H1 (cell line): ENCODE measurements at regions of chr4 and their contacts with region 1.

Region 1: GRCh38 chr4:122827879-122828601 is 1.4 kb downstream of the FGF2 start:
- DNase-seq: peak; percentile 69 to 70
- H3K4me3 ChIP-seq: peak overlapping the region; percentile 79 to 98 (median 90)
- H3K27ac ChIP-seq: peak overlapping the region; percentile 94
- H3K4me1 ChIP-seq: peaks cover 5 to 27% (median 22%) of the 10 kb centered on the region in 4 experiments
- H3K27me3 ChIP-seq: no peaks in the 10 kb centered on the region
- CTCF ChIP-seq: peak in 2 of 3 experiments; percentile 9 to 14; a peak in 2 of 4 replicates
- EP300 ChIP-seq: peak in 1 of 2 experiments; percentile 58; a peak in 2 of 3 replicates
- POLR2A ChIP-seq: peak; percentile 62 to 72
- RAD21 ChIP-seq: no peak; a peak in 1 of 4 replicates

Region 2: DNA sequence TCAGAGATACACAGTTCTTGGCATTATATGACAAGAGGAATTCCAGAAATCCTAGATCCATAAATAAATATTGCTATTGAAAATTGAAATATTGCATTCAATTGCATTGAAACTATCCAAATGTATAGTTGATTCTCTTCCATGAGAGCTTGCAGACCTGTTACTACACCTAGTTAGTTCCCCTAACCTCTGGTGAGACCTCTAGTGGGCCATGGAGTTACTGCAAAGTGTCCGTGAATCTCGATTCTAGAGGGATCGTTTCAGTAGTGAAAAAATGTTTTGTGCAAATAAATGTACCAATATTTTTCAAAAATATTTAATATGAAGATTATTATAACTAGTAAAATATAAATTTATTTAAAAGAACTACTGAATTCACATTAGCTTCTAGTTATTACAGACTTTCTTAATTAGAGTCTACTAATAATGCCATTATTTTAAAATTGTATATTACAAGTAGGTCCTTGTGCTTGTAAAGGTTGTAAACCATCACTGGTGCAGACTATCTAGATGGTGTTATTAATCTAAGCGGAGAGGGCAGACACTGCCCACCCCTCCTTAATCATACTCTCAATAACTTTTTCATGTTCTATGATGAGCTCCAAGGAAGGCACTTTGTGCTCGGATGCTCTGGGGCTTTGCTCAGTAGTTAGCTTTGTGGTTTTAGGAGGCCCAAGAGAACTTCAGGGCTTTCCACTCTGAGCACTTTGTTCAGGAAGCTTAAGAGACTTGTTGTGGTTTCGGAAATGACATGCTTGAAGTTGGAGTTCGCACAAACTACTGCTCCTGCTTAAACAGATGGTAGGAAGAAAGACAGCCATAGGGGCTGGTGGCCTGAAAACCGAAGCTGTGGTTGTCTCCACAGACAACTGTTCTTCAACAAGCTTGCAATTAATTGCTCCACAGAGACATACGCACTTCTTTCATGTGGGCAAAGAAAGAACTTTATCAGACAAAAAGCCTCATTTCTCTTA is 249.9 kb before region 1 on chr4:
- CTCF ChIA-PET with region 1: no interaction called
- POLR2A ChIA-PET with region 1: no interaction called
- DNase-seq: peak in 1 of 2 experiments; percentile 64
- H3K4me3 ChIP-seq: no peak overlapping the region
- H3K27ac ChIP-seq: no peak overlapping the region
- H3K4me1 ChIP-seq: no peaks in the 10 kb centered on the region
- H3K27me3 ChIP-seq: no peaks in the 10 kb centered on the region
- CTCF ChIP-seq: peak in 2 of 3 experiments; percentile 69 to 78; a peak in 3 of 4 replicates
- EP300 ChIP-seq: no peak
- POLR2A ChIP-seq: no peak
- RAD21 ChIP-seq: peak; percentile 55 to 69

Region 3: DNA sequence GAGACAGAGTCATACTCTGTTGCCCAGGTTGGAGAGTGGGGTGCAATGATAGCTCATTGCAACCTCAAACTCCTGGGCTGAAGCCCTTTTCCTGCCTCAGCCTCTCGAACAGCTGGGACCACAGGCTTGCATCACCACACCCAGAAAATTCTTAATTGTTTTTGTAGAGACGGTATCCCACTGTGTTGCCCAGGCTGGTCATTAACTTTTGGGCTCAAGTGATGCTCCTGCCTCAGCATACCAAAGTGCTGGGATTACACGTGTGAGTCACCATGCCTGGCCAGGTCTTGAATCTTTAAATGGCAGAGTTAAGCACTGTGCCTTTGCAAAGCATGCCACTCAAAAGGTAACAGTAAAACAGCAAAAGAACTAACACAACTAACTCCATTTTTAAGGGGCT is 124.2 kb before region 1 on chr4:
- CTCF ChIA-PET with region 1: no interaction called
- POLR2A ChIA-PET with region 1: no interaction called
- DNase-seq: no peak
- H3K4me3 ChIP-seq: no peak overlapping the region
- H3K27ac ChIP-seq: no peak overlapping the region
- H3K4me1 ChIP-seq: no peaks in the 10 kb centered on the region
- H3K27me3 ChIP-seq: no peaks in the 10 kb centered on the region; a peak in 1 of 7 replicates
- CTCF ChIP-seq: no peak
- EP300 ChIP-seq: no peak
- POLR2A ChIP-seq: no peak
- RAD21 ChIP-seq: no peak

Region 4: DNA sequence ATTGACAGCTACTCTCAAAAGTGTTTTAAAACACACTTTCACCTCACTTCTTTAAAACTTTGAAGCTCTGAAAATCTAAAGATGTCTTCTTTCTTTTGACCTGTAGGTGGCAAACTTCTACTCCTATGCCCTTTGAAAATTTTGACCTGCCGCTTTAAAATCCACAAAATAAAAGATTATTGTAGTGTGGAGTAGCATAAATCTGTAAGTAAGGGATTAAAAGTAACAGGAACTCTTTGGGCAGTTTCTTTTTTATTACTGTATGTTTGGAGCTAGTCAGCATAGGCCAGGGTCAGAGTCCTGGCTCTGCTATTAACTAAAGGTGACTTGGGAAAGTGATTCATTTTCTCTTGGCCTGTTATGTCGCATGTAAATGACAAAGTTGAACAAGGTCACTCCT is 70.0 kb before region 1 on chr4:
- CTCF ChIA-PET with region 1: interaction called, 21 read pairs
- POLR2A ChIA-PET with region 1: interaction called, 16 read pairs
- DNase-seq: no peak
- H3K4me3 ChIP-seq: no peak overlapping the region
- H3K27ac ChIP-seq: no peak overlapping the region
- H3K4me1 ChIP-seq: peaks cover 0 to 3% (median under 1%) of the 10 kb centered on the region in 4 experiments; a peak in 2 of 7 replicates
- H3K27me3 ChIP-seq: peaks cover 0 to under 1% (median 0%) of the 10 kb centered on the region in 4 experiments; a peak in 1 of 7 replicates
- CTCF ChIP-seq: peak in 2 of 3 experiments; percentile 31 to 47; a peak in 2 of 4 replicates
- EP300 ChIP-seq: no peak
- POLR2A ChIP-seq: no peak
- RAD21 ChIP-seq: peak; percentile 75 to 77

Region 5: GRCh38 chr4:122783301-122784215 is 44.5 kb before region 1 on chr4:
- CTCF ChIA-PET with region 1: interaction called, 3 read pairs
- POLR2A ChIA-PET with region 1: interaction called, 54 read pairs
- DNase-seq: peak; percentile 72 to 95
- H3K4me3 ChIP-seq: peak overlapping the region in 1 of 4 experiments; percentile 16; a peak in 1 of 8 replicates
- H3K27ac ChIP-seq: peak overlapping the region; percentile 84
- H3K4me1 ChIP-seq: peaks cover 7 to 26% (median 16%) of the 10 kb centered on the region in 4 experiments
- H3K27me3 ChIP-seq: no peaks in the 10 kb centered on the region
- CTCF ChIP-seq: no peak
- EP300 ChIP-seq: no peak
- POLR2A ChIP-seq: peak; percentile 86 to 94
- RAD21 ChIP-seq: peak in 1 of 2 experiments; percentile 22; a peak in 1 of 4 replicates

Region 6: GRCh38 chr4:122798101-122798500 is 29.9 kb before region 1 on chr4:
- CTCF ChIA-PET with region 1: interaction called, 4 read pairs
- POLR2A ChIA-PET with region 1: interaction called, 65 read pairs
- DNase-seq: no peak
- H3K4me3 ChIP-seq: peak overlapping the region in 1 of 4 experiments; percentile 2; a peak in 1 of 8 replicates
- H3K27ac ChIP-seq: peak overlapping the region; percentile 91
- H3K4me1 ChIP-seq: peaks cover 3 to 17% (median 14%) of the 10 kb centered on the region in 4 experiments; a peak in 6 of 7 replicates
- H3K27me3 ChIP-seq: no peaks in the 10 kb centered on the region
- CTCF ChIP-seq: no peak
- EP300 ChIP-seq: no peak
- POLR2A ChIP-seq: no peak; a peak in 1 of 3 replicates
- RAD21 ChIP-seq: peak in 1 of 2 experiments; percentile 24; a peak in 1 of 4 replicates

Region 7: DNA sequence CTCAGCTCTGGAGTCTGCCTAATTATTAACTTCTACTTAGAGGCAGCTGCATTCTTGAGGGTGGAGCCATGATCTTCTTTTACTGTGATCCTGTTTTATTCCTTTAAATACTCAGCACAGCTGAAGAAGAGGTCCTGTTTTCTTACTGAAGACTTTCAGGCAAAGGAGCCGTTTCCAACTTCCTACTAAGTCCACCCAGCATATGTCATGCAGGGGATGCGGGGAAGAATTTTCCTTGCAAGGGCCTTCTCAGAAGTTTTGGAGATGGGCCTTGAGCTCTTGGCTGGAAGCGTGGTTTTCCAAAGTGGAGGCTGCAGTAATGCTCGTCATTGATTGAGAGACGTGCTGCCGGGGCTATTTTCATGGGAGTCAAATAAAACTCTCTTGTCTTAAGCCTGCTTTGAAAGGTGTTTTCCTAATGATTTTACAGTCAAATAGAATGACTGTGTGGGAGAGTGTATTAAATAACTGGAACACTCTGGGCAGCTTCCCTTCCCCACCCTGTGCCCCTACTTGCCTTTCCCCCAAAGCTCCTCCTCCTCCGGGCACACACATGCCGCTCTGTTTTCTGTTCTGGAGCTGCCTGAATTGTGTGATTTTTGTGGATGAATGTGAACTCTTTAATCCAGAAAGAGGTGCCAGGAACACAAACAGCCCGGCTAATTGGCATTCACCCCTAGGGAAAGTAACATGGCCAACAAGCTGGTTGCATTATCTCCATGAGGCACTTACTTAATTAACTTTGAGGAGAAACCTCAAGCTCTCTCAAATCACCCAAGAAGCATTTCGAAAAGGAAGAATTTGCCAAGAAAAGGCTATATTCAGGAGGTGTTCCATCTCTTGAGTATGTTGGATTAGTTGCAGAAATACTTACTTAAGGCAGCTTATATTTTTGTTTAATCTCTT is 26.7 kb after region 1 on chr4:
- CTCF ChIA-PET with region 1: interaction called, 3 read pairs
- POLR2A ChIA-PET with region 1: interaction called, 278 read pairs
- DNase-seq: no peak
- H3K4me3 ChIP-seq: no peak overlapping the region
- H3K27ac ChIP-seq: no peak overlapping the region
- H3K4me1 ChIP-seq: peaks cover 6 to 46% (median 24%) of the 10 kb centered on the region in 4 experiments
- H3K27me3 ChIP-seq: no peaks in the 10 kb centered on the region
- CTCF ChIP-seq: no peak
- EP300 ChIP-seq: no peak
- POLR2A ChIP-seq: no peak
- RAD21 ChIP-seq: no peak

Region 8: DNA sequence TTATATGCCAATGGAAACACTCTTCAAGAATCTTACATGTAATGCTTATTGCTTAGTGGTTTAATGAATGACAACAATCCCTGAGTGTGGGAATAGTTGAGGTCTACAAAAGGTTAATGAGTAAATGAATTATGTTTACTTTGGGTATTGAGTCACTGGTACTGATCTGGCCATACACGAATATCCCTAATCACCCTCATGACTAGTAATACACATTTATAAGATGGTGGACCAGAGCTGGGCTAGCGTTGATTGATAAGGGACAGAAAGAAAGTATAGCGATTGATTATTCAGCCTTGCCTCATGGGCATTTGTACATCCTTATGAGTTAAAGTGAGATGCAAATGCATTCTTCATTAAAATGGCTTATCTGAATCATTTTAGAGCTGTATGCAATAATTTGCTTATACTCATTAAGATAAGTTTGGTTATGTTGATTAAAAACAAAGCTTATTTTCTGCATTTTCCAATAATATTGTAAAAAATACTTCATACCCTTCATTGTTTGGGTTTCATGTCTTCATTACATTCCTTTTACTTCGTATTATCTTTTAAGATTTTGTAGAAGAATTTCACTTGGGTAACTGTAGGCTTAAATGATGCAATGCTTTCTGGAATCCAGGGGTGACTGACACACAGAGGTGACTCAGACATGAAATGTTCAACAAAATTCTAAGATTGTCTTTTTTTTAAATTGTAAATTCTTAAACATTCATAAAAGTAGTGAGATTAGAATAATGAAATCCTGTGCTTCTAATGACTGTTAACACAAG is 46.0 kb after region 1 on chr4:
- CTCF ChIA-PET with region 1: no interaction called
- POLR2A ChIA-PET with region 1: interaction called, 13 read pairs
- DNase-seq: no peak
- H3K4me3 ChIP-seq: no peak overlapping the region
- H3K27ac ChIP-seq: no peak overlapping the region
- H3K4me1 ChIP-seq: peaks cover 0 to 3% (median 0%) of the 10 kb centered on the region in 4 experiments; a peak in 2 of 7 replicates
- H3K27me3 ChIP-seq: no peaks in the 10 kb centered on the region
- CTCF ChIP-seq: no peak
- EP300 ChIP-seq: no peak
- POLR2A ChIP-seq: no peak
- RAD21 ChIP-seq: no peak